SK-N-SH (cell line): ENCODE measurements at regions of chr1 and their contacts with region 1.

Region 1: DNA sequence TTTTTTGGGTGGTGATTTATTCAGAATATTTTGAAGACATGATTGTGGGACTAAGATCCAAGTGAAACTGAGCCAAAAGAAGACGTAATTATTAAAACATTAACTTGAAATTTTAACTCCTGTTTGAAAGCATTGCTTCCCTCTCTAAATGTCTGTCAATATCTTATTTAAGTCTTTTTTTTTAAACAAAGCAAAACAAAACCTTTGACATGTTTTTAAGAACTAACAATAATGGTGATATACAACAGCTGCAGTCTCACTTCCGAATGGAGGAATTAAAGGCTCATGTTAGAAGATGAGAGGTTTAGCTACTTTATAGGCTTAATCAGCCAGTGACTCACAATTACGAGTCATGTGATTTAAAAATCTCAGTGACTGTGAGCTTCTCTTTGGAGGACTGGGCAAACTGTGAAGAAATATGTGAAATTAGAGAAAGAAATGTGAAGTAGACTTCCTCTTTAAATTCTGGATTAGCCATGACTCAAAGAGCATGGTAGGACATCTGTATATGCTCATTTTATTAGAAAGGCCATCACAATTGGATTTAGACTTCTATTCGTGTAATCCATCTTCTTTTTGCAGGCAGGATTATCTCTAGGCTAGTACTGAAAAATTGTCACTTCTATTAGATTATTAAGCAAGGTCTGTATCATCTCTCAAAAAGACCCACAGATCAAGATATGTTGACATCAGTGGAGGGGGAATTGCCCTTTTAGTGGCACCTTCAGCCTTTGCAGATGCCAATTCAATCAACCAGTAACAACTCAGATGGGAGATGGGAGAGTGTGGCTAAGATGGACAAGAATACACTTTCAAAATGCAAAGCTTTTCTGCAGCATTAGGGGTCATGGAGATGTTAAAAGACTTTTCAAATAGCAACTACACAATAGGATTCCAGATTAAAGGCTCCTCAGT is 28.7 kb downstream of the KCNA3 start:
- DNase-seq: no peak
- H3K4me3 ChIP-seq: no peak overlapping the region
- H3K27ac ChIP-seq: no peak overlapping the region
- H3K4me1 ChIP-seq: peaks cover 0 to 23% of the 10 kb centered on the region in 2 experiments; a peak in 1 of 4 replicates
- H3K27me3 ChIP-seq: no peaks in the 10 kb centered on the region
- CTCF ChIP-seq: no peak
- EP300 ChIP-seq: no peak
- RAD21 ChIP-seq: no peak

Region 2: DNA sequence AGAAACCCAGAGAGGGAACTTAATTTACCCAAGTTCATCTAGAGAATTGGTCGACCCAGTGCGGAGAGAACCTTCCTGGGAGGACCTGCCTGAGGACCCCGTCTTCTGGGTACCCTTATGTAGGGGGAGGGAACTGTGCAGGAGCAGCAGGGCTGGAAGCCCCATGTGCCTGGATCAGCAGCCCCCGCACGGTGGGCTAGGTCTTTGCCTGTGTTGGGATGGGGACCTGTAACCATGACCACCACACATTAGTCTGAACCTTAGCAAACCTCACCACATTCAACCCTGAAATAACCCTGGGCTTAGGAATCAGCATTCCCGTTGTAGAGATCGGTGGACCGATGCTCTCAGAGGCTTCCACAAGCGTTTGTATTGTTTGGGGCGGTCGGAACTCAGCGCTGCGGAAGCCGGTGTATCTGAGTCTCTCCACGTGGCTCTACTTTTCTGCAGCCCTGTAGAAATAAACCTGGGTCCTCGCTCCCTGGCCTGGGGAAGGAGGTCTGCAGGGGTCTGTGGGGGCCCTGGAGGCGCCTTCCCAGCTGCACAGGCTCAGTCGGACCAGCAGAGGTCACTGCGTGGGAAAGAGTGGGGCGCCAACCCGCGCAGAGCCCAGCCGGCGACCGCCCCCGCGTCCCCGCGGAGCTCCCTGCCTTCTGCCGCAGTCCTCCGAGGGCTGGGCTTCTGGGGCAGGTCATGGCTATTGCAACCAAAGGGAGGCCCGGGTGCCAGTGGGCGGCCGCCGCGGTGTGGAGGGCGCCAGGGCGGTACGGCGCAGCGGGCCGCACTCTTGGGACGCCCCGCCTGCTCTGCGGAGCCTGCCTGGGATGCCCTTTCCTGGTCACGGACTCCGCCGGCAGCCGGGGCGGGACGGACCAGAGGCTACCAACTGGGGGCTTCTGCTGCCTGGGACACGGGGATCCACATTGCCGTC is 90.9 kb before region 1 on chr1:
- CTCF ChIA-PET with region 1: no interaction called
- POLR2A ChIA-PET with region 1: no interaction called
- DNase-seq: peak; percentile 89
- H3K4me3 ChIP-seq: peak overlapping the region; percentile 42 to 44; a peak in 3 of 4 replicates
- H3K27ac ChIP-seq: no peak overlapping the region
- H3K4me1 ChIP-seq: peaks cover 0 to 9% of the 10 kb centered on the region in 2 experiments; a peak in 1 of 4 replicates
- H3K27me3 ChIP-seq: peaks cover 15% of the 10 kb centered on the region; the same call in 1 of the 2 replicates
- CTCF ChIP-seq: peak; percentile 59
- EP300 ChIP-seq: no peak
- RAD21 ChIP-seq: peak; percentile 42

Region 3: GRCh38 chr1:110630839-110631663 is 15.0 kb before region 1 on chr1:
- CTCF ChIA-PET with region 1: interaction called, 10 read pairs
- POLR2A ChIA-PET with region 1: no interaction called
- DNase-seq: peak; percentile 78
- H3K4me3 ChIP-seq: no peak overlapping the region
- H3K27ac ChIP-seq: no peak overlapping the region
- H3K4me1 ChIP-seq: no peaks in the 10 kb centered on the region; a peak in 1 of 4 replicates
- H3K27me3 ChIP-seq: peaks cover 7% of the 10 kb centered on the region; the same call in 1 of the 2 replicates
- CTCF ChIP-seq: peak; percentile 78
- EP300 ChIP-seq: no peak
- RAD21 ChIP-seq: peak; percentile 84

Region 4: GRCh38 chr1:110918016-110918415 is 271.9 kb after region 1 on chr1:
- CTCF ChIA-PET with region 1: no interaction called
- POLR2A ChIA-PET with region 1: no interaction called
- DNase-seq: no peak
- H3K4me3 ChIP-seq: no peak overlapping the region
- H3K27ac ChIP-seq: no peak overlapping the region
- H3K4me1 ChIP-seq: no peaks in the 10 kb centered on the region
- H3K27me3 ChIP-seq: no peaks in the 10 kb centered on the region
- CTCF ChIP-seq: no peak
- EP300 ChIP-seq: no peak
- RAD21 ChIP-seq: no peak